IMR-90 (cell line): ENCODE measurements at regions of chr16 and their contacts with region 1.

Region 1: DNA sequence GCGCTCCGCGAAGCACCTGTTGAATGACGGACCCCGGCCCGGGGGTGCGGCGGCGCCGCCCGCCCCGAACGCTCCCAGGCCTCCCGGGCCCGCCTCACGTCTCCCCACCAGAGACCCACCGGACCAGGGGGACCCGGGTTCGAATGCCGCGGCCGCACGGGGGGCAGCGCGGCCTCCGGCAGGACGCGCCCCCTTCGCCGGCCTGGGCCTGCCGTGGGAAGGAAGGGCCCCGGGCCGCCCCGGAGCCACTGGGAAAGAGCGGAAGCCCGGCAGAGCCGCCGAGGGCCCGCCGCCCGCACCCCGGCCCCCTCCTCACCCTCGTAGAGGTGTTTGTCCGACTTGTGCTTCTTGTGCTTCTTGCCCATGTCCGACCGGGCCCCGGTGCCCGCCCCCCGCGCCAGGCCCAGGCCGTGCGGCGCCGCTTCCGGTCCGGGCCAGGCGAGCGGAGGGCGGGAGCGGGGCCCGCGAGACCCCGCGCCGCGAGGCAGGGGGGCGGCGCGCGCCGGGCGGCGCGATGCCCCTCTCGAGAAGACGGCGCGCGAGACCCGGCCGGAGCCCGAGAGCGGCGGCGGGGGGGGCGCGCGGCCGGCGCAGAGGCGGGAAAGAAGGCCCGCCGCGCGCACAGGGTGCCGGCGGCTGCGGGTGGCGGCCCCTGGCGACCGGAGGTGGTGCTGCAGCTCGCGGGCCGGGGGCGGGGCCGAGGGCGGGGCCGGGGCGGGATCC is at the start of gene BRD7:
- DNase-seq: peak; percentile 37
- ATAC-seq: peak; percentile 96
- H3K4me3 ChIP-seq: peak within 1 kb of the TSS; percentile 88
- H3K27ac ChIP-seq: peak within 1 kb of the TSS; percentile 33; the same call in 1 of the 2 replicates
- H3K4me1 ChIP-seq: peaks cover 2% of the 10 kb centered on the region; the same call in 1 of the 2 replicates
- H3K27me3 ChIP-seq: peaks cover 10% of the 10 kb centered on the region
- CTCF ChIP-seq: peak; percentile 56
- POLR2A ChIP-seq: no peak
- RAD21 ChIP-seq: peak; percentile 29
- total RNA-seq, gene BRD7: 29.9 and 38.9 TPM in 2 replicates

Region 2: DNA sequence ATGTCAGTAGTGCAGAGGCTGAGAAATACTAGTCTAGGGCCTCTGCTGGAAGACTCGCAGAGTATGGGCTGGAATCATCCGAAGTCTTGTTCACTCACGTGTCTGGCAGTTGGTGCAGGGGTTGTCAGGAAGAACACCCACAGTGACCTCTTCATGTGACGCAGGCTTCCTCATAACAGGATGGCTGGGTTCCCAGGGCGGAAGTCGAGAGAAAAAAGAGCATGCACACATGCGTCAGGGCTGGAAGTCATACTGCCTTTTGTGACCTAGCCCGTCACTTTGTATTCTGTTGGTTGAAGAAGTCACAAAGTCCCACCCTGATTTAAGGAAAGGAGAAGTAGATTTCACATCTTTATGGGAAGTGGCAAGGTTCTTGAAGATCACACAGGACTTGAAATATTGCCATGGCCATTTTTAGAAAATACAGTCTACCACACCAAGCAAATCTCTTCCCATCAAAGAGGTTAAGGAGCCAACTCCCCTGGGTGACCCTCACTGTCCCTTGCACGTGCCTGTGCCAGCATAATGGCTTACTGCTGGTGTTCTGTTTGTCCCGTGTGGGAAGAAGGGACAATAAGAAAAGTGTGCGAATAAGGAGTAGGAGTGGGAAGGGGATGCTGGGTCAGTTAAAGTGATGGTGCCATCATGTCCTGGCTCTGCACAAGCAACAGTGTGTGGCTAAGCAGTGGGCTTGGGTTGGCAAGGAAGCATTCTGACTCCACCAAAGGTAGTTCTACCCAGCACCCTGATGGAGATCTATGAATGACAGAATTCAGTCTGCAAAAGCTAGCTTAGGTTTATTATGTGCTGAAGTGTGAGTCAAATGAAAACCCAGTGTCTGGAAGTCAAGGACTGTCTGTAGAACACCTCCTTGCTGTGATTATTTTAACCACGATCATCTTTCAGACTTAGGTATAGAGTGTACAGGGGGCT is 274.7 kb before region 1 on chr16:
- CTCF ChIA-PET with region 1: no interaction called
- POLR2A ChIA-PET with region 1: no interaction called
- dilution Hi-C with region 1: no loop called
- in situ Hi-C with region 1: loop called (anchors 25 kb)
- intact Hi-C with region 1: no loop called
- DNase-seq: no peak
- ATAC-seq: no peak
- H3K4me3 ChIP-seq: no peak overlapping the region
- H3K27ac ChIP-seq: no peak overlapping the region
- H3K4me1 ChIP-seq: no peaks in the 10 kb centered on the region
- H3K27me3 ChIP-seq: no peaks in the 10 kb centered on the region
- CTCF ChIP-seq: no peak
- POLR2A ChIP-seq: no peak
- RAD21 ChIP-seq: no peak

Region 3: DNA sequence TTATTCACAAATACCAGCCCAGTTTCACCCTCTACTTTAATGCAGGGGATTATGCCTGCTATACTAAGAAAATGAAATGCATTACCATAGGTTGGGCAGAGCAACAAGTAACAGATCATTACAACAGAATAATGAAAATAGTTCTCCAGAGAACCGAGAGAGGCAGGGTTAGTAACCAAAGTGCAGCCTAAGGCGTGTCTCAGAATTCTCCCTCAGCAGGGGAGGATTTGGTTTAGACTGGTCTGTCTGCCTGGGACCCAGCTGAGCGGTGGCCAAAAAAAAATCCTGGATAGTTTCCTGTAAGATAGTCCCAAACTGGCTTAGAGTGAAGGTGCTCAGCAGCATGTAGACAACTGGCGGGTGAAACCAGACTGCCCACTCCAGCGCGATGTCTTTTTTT is 133.0 kb before region 1 on chr16:
- CTCF ChIA-PET with region 1: no interaction called
- POLR2A ChIA-PET with region 1: no interaction called
- dilution Hi-C with region 1: no loop called
- in situ Hi-C with region 1: no loop called
- intact Hi-C with region 1: loop called (anchors 2 kb)
- DNase-seq: no peak
- ATAC-seq: peak; percentile 27; the same call in 1 of the 2 replicates
- H3K4me3 ChIP-seq: no peak overlapping the region
- H3K27ac ChIP-seq: no peak overlapping the region
- H3K4me1 ChIP-seq: peaks cover 11% of the 10 kb centered on the region
- H3K27me3 ChIP-seq: peaks cover 9% of the 10 kb centered on the region
- CTCF ChIP-seq: no peak
- POLR2A ChIP-seq: no peak
- RAD21 ChIP-seq: no peak

Region 4: DNA sequence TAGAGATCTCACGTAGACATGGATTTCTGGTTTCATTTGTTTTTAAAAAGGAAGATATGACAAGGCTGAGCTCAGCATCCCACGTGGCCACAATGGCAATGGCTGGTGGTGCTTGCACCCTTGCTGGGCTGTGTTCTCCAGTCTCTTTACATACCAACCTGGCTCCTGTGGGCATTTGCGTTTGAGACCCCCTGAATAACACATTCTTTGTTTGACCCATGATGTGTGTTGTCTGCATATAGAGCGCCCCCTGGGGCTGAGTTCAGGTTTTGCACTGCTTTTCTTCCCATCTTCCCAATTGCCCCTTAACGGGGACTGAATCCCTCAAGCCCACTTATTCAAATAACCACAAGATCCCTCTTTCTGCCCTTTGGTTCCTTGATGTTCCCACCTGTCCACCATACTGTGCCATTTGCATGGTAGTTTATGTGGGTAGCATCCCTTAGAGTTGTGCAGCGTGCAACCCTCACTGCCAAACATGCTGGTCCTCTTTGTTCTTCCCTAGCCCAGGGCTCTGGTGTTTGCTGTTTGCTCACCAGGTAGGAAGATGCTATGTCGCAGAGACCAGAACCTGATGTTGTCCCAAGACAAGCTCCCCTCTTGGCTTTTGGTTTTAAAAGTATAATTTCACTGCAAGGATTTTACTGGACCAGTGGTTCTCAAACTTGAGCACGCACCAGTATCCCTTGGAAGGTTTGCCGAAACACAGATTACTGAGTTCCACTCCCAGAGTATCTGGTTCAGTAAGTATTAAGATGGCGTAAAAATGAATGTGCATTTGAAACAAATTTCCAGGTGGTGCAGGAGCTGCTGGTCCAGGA is 141.2 kb after region 1 on chr16:
- CTCF ChIA-PET with region 1: no interaction called
- POLR2A ChIA-PET with region 1: no interaction called
- dilution Hi-C with region 1: no loop called
- in situ Hi-C with region 1: no loop called
- intact Hi-C with region 1: loop called (anchors 2 kb)
- DNase-seq: peak; percentile 6
- ATAC-seq: no peak
- H3K4me3 ChIP-seq: no peak overlapping the region
- H3K27ac ChIP-seq: no peak overlapping the region
- H3K4me1 ChIP-seq: no peaks in the 10 kb centered on the region
- H3K27me3 ChIP-seq: peaks cover 2% of the 10 kb centered on the region; the same call in 1 of the 2 replicates
- CTCF ChIP-seq: peak; percentile 51
- POLR2A ChIP-seq: no peak
- RAD21 ChIP-seq: peak; percentile 40

Region 5: DNA sequence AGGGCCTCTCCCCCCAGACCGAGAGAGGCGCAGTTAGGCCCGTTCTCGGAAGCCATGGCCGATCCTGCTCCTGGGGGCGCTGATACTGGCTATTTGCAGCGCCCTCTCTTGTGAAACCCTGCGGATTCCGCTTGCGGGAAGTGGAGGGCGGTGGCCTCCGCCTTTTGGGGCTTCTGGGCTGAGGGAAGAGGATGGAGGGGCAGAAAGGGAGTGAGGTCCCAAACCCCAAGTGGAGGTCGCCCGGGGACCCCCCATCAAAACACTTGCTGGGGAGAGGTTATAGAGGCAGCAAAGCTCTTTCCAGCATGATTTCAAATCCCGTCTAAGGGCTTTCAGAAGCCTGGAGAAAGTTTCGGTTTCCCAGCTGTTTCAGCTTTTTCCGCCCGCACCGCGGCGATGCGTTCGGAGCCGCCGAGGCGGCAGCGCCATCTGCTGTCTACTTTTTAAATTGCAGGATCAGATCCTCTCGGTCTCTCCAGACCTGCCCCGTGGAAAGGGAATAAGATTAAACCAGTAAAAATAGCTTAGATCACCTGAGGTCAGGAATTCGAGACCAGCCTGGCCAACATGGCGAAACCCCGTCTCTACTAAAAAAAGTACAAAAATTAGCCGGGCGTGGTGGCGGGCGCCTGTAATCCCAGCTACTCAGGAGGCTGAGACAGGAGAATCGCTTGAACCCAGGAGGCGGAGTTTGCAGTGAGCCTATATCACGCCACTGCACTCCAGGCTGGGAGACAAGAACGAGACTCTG is 296.7 kb after region 1 on chr16:
- CTCF ChIA-PET with region 1: interaction called, 7 read pairs
- POLR2A ChIA-PET with region 1: no interaction called
- dilution Hi-C with region 1: no loop called
- in situ Hi-C with region 1: loop called (anchors 10 kb)
- intact Hi-C with region 1: loop called (anchors 1 kb)
- DNase-seq: peak; percentile 57
- ATAC-seq: peak; percentile 98
- H3K4me3 ChIP-seq: peak overlapping the region; percentile 47
- H3K27ac ChIP-seq: no peak overlapping the region
- H3K4me1 ChIP-seq: no peaks in the 10 kb centered on the region
- H3K27me3 ChIP-seq: no peaks in the 10 kb centered on the region; the same call in 1 of the 2 replicates
- CTCF ChIP-seq: peak; percentile 94
- POLR2A ChIP-seq: no peak
- RAD21 ChIP-seq: peak; percentile 83